ENCODE measurements at regions of chr13 and their contacts with region 1.

Region 1: GRCh38 chr13:27424246-27425157 is at the start of gene GTF3A:
- DNase-seq: peak; percentile 96
- ATAC-seq: peak; percentile 66
- H3K4me3 ChIP-seq: peak within 1 kb of the TSS; percentile 74 to 97 (median 83)
- H3K4me3 Mint-ChIP-seq: peak within 1 kb of the TSS; percentile 82
- H3K27ac ChIP-seq: peak within 1 kb of the TSS; percentile 78 to 88
- H3K27ac Mint-ChIP-seq: peak within 1 kb of the TSS; percentile 88
- H3K4me1 ChIP-seq: peaks cover 25 to 36% of the 10 kb centered on the region in 2 donors
- H3K4me1 Mint-ChIP-seq: peaks cover 39% of the 10 kb centered on the region
- H3K27me3 ChIP-seq: no peaks in the 10 kb centered on the region
- H3K27me3 Mint-ChIP-seq: no peaks in the 10 kb centered on the region
- CTCF ChIP-seq: no peak
- total RNA-seq, gene GTF3A: 114 and 122 TPM in 2 replicates

Region 2: GRCh38 chr13:26253787-26254582 is 1170.5 kb before region 1 on chr13 and contains the start of gene CDK8:
- CTCF ChIA-PET with region 1: no interaction called
- POLR2A ChIA-PET with region 1: no interaction called
- intact Hi-C with region 1: loop called (anchors 10 kb)
- DNase-seq: peak; percentile 97
- ATAC-seq: peak; percentile 86
- H3K4me3 ChIP-seq: peak within 1 kb of the TSS; percentile 66 to 98 (median 77)
- H3K4me3 Mint-ChIP-seq: peak within 1 kb of the TSS; percentile 83
- H3K27ac ChIP-seq: peak within 1 kb of the TSS; percentile 72 to 80
- H3K27ac Mint-ChIP-seq: peak within 1 kb of the TSS; percentile 81
- H3K4me1 ChIP-seq: peaks cover 14 to 17% of the 10 kb centered on the region in 2 donors
- H3K4me1 Mint-ChIP-seq: peaks cover 29% of the 10 kb centered on the region
- H3K27me3 ChIP-seq: peaks cover 0 to 4% (median 2%) of the 10 kb centered on the region in 4 experiments
- H3K27me3 Mint-ChIP-seq: peaks cover 8% of the 10 kb centered on the region
- CTCF ChIP-seq: no peak
- total RNA-seq, gene CDK8: 13.5 TPM in 2 replicates

Region 3: DNA sequence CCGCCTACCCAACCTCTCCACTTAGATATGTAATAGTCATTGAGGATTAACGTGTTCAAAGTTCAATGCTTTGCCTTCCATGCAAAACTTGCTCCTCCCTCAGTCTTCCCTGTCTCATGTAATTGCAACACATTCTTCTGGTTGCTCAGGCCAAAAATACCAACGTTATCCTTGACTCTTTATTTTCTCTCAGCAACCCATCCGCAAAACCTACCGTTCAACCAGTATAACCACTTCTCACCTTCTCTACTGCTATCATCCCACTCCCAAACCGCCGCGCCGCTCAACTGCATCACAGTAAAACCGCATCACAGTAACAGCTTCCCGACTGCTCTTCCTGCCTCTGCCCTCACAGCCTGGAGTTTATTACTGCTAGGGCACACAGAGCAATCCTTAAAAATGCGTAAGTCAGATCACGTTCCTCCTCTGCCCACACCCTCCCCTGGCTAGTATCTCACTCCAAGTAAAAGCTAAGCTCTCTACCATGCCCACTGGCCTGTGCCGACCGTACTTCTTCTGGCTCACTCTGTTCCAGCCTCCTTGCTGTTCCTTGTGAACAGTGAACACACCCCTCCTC is 17.7 kb after region 1 on chr13:
- CTCF ChIA-PET with region 1: interaction called, 75 read pairs
- POLR2A ChIA-PET with region 1: interaction called, 106 read pairs
- intact Hi-C with region 1: no loop called
- DNase-seq: no peak
- ATAC-seq: no peak
- H3K4me3 ChIP-seq: peak overlapping the region in 4 of 5 experiments; percentile 4 to 34 (median 18)
- H3K4me3 Mint-ChIP-seq: peak overlapping the region; percentile 80
- H3K27ac ChIP-seq: peak overlapping the region; percentile 21 to 32
- H3K27ac Mint-ChIP-seq: peak overlapping the region; percentile 80
- H3K4me1 ChIP-seq: peaks cover 41 to 57% of the 10 kb centered on the region in 2 donors
- H3K4me1 Mint-ChIP-seq: peaks cover 57% of the 10 kb centered on the region
- H3K27me3 ChIP-seq: no peaks in the 10 kb centered on the region
- H3K27me3 Mint-ChIP-seq: no peaks in the 10 kb centered on the region
- CTCF ChIP-seq: no peak

Region 4: GRCh38 chr13:27482983-27483382 is 58.5 kb after region 1 on chr13:
- CTCF ChIA-PET with region 1: interaction called, 6 read pairs
- POLR2A ChIA-PET with region 1: interaction called, 5 read pairs
- intact Hi-C with region 1: loop called (anchors 1 kb)
- DNase-seq: peak; percentile 90
- ATAC-seq: peak; percentile 99
- H3K4me3 ChIP-seq: peak overlapping the region in 4 of 5 experiments; percentile 11 to 43 (median 30)
- H3K4me3 Mint-ChIP-seq: peak overlapping the region; percentile 81
- H3K27ac ChIP-seq: peak overlapping the region; percentile 71 to 82
- H3K27ac Mint-ChIP-seq: peak overlapping the region; percentile 93
- H3K4me1 ChIP-seq: peaks cover 37 to 45% of the 10 kb centered on the region in 2 donors
- H3K4me1 Mint-ChIP-seq: peaks cover 41% of the 10 kb centered on the region
- H3K27me3 ChIP-seq: no peaks in the 10 kb centered on the region
- H3K27me3 Mint-ChIP-seq: no peaks in the 10 kb centered on the region
- CTCF ChIP-seq: no peak

Region 5: GRCh38 chr13:27620377-27621115 is 196.0 kb after region 1 on chr13 and contains the start of gene LNX2:
- CTCF ChIA-PET with region 1: interaction called, 21 read pairs
- POLR2A ChIA-PET with region 1: interaction called, 26 read pairs
- intact Hi-C with region 1: loop called (anchors 1 kb)
- DNase-seq: peak; percentile 96
- ATAC-seq: peak; percentile 83
- H3K4me3 ChIP-seq: peak within 1 kb of the TSS; percentile 77 to 92 (median 90)
- H3K4me3 Mint-ChIP-seq: peak within 1 kb of the TSS; percentile 93
- H3K27ac ChIP-seq: peak within 1 kb of the TSS; percentile 98
- H3K27ac Mint-ChIP-seq: peak within 1 kb of the TSS; percentile 92
- H3K4me1 ChIP-seq: peaks cover 27 to 28% of the 10 kb centered on the region in 2 donors
- H3K4me1 Mint-ChIP-seq: peaks cover 62% of the 10 kb centered on the region
- H3K27me3 ChIP-seq: no peaks in the 10 kb centered on the region
- H3K27me3 Mint-ChIP-seq: no peaks in the 10 kb centered on the region
- CTCF ChIP-seq: no peak
- total RNA-seq, gene LNX2: 10.0 and 10.9 TPM in 2 replicates